ENCODE measurements at regions of chr2 and their contacts with region 1.

Region 1: DNA sequence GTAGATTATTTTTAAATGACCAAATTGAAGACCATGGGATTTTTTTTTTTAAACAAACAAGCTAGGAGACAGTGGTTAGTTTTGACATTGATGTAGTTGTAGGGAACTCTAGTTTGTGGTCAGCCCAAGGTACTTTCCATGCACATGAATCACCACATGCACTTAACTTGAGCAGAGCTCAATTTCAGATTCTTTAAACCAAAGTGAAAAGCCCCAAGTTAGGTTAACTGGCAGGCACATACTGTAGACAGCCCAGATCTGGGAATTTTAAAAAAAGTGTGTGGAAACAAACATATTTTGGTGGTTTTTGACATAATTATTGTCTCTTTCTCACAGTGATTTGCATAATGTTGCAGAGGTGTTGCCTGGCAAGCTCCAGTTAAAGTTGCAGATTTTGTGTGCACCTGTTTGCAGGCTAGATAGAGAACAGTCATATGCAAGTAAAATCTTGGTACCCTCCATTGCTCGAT is 88.4 kb downstream of the BCL2L11 start:
- DNase-seq: peak; percentile 97
- ATAC-seq: peak; percentile 95
- H3K4me3 ChIP-seq: no peak overlapping the region
- H3K27ac ChIP-seq: no peak overlapping the region
- H3K4me1 ChIP-seq: peaks cover 7% of the 10 kb centered on the region
- H3K27me3 ChIP-seq: no peaks in the 10 kb centered on the region
- CTCF ChIP-seq: no peak
- EP300 ChIP-seq: peak; percentile 95 to 97
- POLR2A ChIP-seq: no peak
- RAD21 ChIP-seq: 0 out of 2 replicates have a peak, but pooled peaks have one; percentile 1

Region 2: GRCh38 chr2:111157798-111158197 is 51.3 kb before region 1 on chr2:
- CTCF ChIA-PET with region 1: interaction called, 9 read pairs
- POLR2A ChIA-PET with region 1: interaction called, 4 read pairs
- RAD21 ChIA-PET with region 1: interaction called, 5 read pairs
- SMC1A ChIA-PET with region 1: interaction called, 20 read pairs
- in situ Hi-C with region 1: no loop called
- intact Hi-C with region 1: no loop called
- DNase-seq: peak; percentile 69
- ATAC-seq: peak; percentile 82
- H3K4me3 ChIP-seq: no peak overlapping the region
- H3K27ac ChIP-seq: no peak overlapping the region
- H3K4me1 ChIP-seq: peaks cover 19% of the 10 kb centered on the region
- H3K27me3 ChIP-seq: no peaks in the 10 kb centered on the region
- CTCF ChIP-seq: peak; percentile 19 to 27 (median 22); a peak in 3 of 6 replicates
- EP300 ChIP-seq: no peak
- POLR2A ChIP-seq: no peak
- RAD21 ChIP-seq: no peak

Region 3: DNA sequence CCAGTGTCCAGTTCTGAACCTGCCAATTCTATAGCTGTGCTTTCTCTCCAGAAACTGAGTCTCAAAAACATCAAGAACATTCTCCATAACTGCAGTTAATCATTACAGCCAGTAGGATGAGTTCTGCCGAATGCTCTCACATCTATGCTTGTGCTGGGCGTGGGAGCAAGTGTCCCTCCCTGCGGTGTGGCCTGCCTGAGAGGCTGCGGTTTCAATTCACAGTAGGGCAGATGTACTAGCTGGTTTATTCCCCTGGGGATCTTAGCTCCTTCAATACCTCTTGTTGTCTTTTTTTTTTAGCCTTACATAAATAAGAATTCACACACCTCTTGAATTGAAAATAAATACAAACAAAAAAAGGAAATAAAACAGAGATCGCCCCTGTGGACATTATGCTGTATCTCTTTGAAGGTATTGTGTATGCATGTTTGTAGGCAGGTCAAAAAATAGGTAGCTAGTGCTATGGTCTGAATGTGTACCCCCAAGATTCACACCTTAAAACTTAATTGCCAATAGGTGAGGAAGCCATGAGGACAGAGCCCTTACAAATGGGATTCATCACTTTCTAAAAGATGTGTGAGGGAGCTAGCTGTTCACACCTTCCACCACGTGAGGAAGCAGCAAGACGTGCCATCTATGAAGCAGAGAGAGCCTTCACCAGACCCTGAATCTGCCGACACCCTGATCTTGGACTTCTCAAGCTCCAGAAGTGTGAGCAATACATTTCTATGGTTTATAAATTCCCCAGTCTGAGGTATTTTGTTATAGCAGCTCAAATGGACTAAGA is 14.1 kb before region 1 on chr2:
- CTCF ChIA-PET with region 1: interaction called, 28 read pairs
- POLR2A ChIA-PET with region 1: interaction called, 39 read pairs
- RAD21 ChIA-PET with region 1: interaction called, 139 read pairs
- SMC1A ChIA-PET with region 1: interaction called, 113 read pairs
- in situ Hi-C with region 1: no loop called
- intact Hi-C with region 1: loop called (anchors 1 kb)
- DNase-seq: peak; percentile 98
- ATAC-seq: peak; percentile 88
- H3K4me3 ChIP-seq: no peak overlapping the region
- H3K27ac ChIP-seq: peak overlapping the region; percentile 41; the same call in 1 of the 2 replicates
- H3K4me1 ChIP-seq: peaks cover 36% of the 10 kb centered on the region
- H3K27me3 ChIP-seq: no peaks in the 10 kb centered on the region
- CTCF ChIP-seq: peak; percentile 42 to 46 (median 45); a peak in 5 of 6 replicates
- EP300 ChIP-seq: peak; percentile 76 to 96
- POLR2A ChIP-seq: no peak
- RAD21 ChIP-seq: peak; percentile 47

Region 4: GRCh38 chr2:111227716-111228141 is 18.6 kb after region 1 on chr2:
- CTCF ChIA-PET with region 1: no interaction called
- POLR2A ChIA-PET with region 1: interaction called, 3 read pairs
- RAD21 ChIA-PET with region 1: interaction called, 13 read pairs
- SMC1A ChIA-PET with region 1: interaction called, 6 read pairs
- in situ Hi-C with region 1: no loop called
- intact Hi-C with region 1: no loop called
- DNase-seq: no peak
- ATAC-seq: no peak
- H3K4me3 ChIP-seq: no peak overlapping the region
- H3K27ac ChIP-seq: no peak overlapping the region
- H3K4me1 ChIP-seq: peaks cover 5% of the 10 kb centered on the region; the same call in 1 of the 2 replicates
- H3K27me3 ChIP-seq: no peaks in the 10 kb centered on the region
- CTCF ChIP-seq: no peak
- EP300 ChIP-seq: no peak
- POLR2A ChIP-seq: no peak
- RAD21 ChIP-seq: no peak

Region 5: DNA sequence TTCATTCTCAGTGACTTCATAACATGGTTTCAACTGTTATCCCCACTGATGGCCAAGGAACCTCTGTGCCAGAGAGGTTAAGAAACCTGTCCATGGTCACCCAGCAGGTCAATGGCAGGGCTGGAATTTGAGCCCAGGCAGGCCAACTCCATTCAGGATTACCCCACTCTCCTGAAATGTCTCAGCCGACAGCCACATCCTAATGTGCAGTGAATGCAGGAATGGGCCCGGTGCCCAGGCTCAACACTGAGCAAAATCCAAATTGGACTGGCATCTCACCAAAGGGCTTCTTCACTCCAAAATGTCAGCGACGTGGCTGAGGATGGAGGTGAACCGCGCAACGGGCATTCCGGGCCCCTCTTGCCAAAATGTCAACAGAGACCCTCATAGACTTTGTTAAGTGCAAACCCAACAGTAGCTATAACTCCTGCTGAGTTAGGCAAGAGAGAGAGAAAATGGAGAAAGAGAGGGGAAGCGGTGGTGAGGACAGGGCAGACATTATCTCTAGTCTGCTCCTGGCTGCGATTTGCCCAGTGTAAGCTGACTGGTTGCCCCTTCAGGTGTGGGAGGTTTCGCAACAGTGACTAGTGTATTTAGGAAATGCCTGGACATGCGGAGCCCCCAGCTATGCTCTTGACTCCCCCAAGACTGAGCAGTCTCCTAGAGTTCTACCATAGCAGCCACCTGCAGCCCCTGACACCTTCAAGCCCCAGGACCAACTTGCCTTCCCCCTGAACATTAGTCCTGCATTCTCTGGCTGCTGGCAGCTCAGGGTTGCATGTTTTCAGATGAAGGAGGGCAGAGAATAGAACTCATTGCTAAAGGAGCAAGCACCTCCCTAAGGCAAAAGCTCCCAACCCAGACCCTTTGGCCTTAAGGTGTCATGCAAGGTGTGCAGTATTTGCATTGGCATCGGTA is 507.2 kb after region 1 on chr2:
- CTCF ChIA-PET with region 1: no interaction called
- POLR2A ChIA-PET with region 1: no interaction called
- RAD21 ChIA-PET with region 1: no interaction called
- SMC1A ChIA-PET with region 1: no interaction called
- in situ Hi-C with region 1: no loop called
- intact Hi-C with region 1: no loop called
- DNase-seq: no peak
- ATAC-seq: no peak
- H3K4me3 ChIP-seq: no peak overlapping the region
- H3K27ac ChIP-seq: no peak overlapping the region
- H3K4me1 ChIP-seq: no peaks in the 10 kb centered on the region
- H3K27me3 ChIP-seq: no peaks in the 10 kb centered on the region; a peak in 1 of 4 replicates
- CTCF ChIP-seq: no peak
- EP300 ChIP-seq: no peak
- POLR2A ChIP-seq: no peak
- RAD21 ChIP-seq: no peak